Activated CD4-positive, alpha-beta T cell treated with anti-CD3 and anti-CD28 coated beads, Interleukin-2, amount 10 ng/mL, durations not matched to agents 24 days and 14 days (primary cell): ENCODE measurements at regions of chr11 and their contacts with region 1.

Region 1: GRCh38 chr11:108664730-108665525 is at the start of gene DDX10:
- DNase-seq: peak; percentile 100
- H3K4me3 Mint-ChIP-seq: peak within 1 kb of the TSS; percentile 97
- H3K27ac Mint-ChIP-seq: peak within 1 kb of the TSS; percentile 99
- H3K4me1 Mint-ChIP-seq: peaks cover 38% of the 10 kb centered on the region
- H3K27me3 Mint-ChIP-seq: peaks cover 10% of the 10 kb centered on the region
- total RNA-seq, gene DDX10: 68.9 and 71.6 TPM in 2 replicates

Region 2: DNA sequence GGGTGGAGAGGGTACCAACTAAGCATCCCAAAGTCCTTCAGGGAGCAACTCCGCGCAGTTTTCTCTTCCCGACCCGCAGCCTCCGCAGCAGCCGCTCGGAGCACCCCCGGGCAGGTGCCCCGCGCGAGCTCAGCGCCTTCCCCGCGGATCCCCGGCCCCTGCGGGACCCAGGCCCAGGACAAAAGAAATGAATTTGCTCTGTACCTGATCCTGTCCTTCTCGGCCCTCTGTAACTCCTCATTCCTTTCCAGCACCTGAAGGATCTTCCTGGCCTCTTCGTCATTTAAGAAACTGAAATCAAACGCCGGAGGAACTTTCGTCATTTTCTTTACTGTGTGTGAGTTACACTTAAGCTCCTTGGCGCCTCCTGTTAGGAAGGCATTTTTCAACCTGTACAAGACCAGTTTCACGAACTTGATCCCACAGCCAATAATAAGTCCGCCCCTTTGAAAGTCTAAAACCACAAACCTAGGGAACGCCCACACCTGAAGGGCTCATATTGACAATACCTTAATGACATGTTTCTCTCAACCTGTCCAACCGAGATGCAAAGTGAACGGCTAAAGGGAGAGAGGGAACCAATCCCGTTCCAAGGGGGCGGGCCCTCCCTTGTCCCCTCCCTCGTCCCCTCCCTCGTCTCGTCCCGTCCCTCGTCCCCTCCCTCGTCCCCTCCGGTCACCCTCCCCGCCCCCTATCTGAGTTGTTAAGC is 71.6 kb before region 1 on chr11 and contains the start of gene EXPH5:
- intact Hi-C with region 1: loop called (anchors 2 kb)
- DNase-seq: peak; percentile 95
- H3K4me3 Mint-ChIP-seq: peak within 1 kb of the TSS; percentile 91
- H3K27ac Mint-ChIP-seq: peak within 1 kb of the TSS; percentile 85
- H3K4me1 Mint-ChIP-seq: peaks cover 16% of the 10 kb centered on the region
- H3K27me3 Mint-ChIP-seq: peaks cover 49% of the 10 kb centered on the region
- total RNA-seq, gene EXPH5: 0.90 and 0.91 TPM in 2 replicates